MCF 10A (cell line): ENCODE measurements at regions of chr16 and their contacts with region 1.

Region 1: GRCh38 chr16:72066747-72067146 is 3.7 kb downstream of the HPR start:
- DNase-seq: peak; percentile 54
- H3K4me3 Mint-ChIP-seq: no peak overlapping the region
- H3K27ac Mint-ChIP-seq: peak overlapping the region; percentile 43
- H3K4me1 Mint-ChIP-seq: no peaks in the 10 kb centered on the region
- H3K27me3 Mint-ChIP-seq: no peaks in the 10 kb centered on the region
- CTCF ChIP-seq: peak; percentile 43

Region 2: GRCh38 chr16:71537643-71538042 is 529.1 kb before region 1 on chr16:
- CTCF ChIA-PET with region 1: no interaction called
- POLR2A ChIA-PET with region 1: no interaction called
- intact Hi-C with region 1: no loop called
- DNase-seq: peak; percentile 69
- H3K4me3 Mint-ChIP-seq: no peak overlapping the region
- H3K27ac Mint-ChIP-seq: no peak overlapping the region
- H3K4me1 Mint-ChIP-seq: no peaks in the 10 kb centered on the region
- H3K27me3 Mint-ChIP-seq: peaks cover 11% of the 10 kb centered on the region
- CTCF ChIP-seq: peak; percentile 76

Region 3: GRCh38 chr16:72093448-72094265 is 26.9 kb after region 1 on chr16 and contains the starts of genes DHX38 and TXNL4B:
- CTCF ChIA-PET with region 1: interaction called, 65 read pairs
- POLR2A ChIA-PET with region 1: interaction called, 9 read pairs
- intact Hi-C with region 1: no loop called
- DNase-seq: peak; percentile 99
- H3K4me3 Mint-ChIP-seq: peak within 1 kb of the TSS; percentile 99
- H3K27ac Mint-ChIP-seq: peak within 1 kb of the TSS; percentile 93
- H3K4me1 Mint-ChIP-seq: peaks cover 38% of the 10 kb centered on the region
- H3K27me3 Mint-ChIP-seq: no peaks in the 10 kb centered on the region
- CTCF ChIP-seq: no peak
- total RNA-seq, gene DHX38: 65.2 and 75.2 TPM in 2 replicates
- total RNA-seq, gene TXNL4B: 17.4 and 18.6 TPM in 2 replicates

Region 4: GRCh38 chr16:72099377-72099818 is 32.7 kb after region 1 on chr16:
- CTCF ChIA-PET with region 1: interaction called, 65 read pairs
- POLR2A ChIA-PET with region 1: interaction called, 3 read pairs
- intact Hi-C with region 1: loop called (anchors 1 kb)
- DNase-seq: peak; percentile 61
- H3K4me3 Mint-ChIP-seq: no peak overlapping the region
- H3K27ac Mint-ChIP-seq: no peak overlapping the region
- H3K4me1 Mint-ChIP-seq: peaks cover 22% of the 10 kb centered on the region
- H3K27me3 Mint-ChIP-seq: no peaks in the 10 kb centered on the region
- CTCF ChIP-seq: peak; percentile 59